Activated B cell treated with CpG ODN at 0.5 μM for 24 hours (primary cell): ENCODE measurements at regions of chr2 and their contacts with region 1.

Region 1: DNA sequence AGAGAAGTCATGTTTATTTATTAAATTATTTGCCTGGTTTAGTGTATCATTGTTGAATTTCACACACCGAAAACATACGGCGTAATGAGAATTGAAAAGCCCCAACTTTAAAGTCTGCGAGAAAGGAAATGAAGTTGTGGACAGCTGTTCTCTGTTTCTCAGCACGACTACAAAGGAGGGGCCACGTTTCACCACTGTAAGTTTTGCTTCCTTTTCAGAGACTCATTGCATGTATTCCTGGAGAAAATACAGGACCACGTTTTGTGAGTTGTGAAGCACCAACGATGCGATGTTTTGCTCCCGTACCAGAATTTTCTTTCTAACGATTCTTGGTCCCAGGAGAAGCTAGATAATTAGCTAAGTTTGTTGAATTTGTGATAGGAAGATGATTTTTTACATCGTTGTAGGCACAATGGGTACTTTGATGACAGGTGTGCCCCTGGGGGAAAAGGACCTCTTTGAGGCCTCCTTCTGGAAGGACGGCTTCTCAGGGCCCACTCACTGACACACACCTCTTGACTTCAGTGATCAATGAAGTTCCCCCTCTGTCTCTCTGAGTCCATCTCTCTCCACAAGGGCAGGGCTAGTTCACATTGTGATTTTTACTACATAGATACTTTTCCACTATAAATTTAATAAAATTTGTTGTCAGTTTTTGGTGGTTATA is 23.7 kb upstream of the ACKR3 start:
- DNase-seq: no peak
- ATAC-seq: peak; percentile 57
- H3K4me3 Mint-ChIP-seq: peak overlapping the region; percentile 78
- H3K27ac Mint-ChIP-seq: peak overlapping the region; percentile 98
- H3K4me1 Mint-ChIP-seq: peaks cover 78% of the 10 kb centered on the region
- H3K27me3 Mint-ChIP-seq: no peaks in the 10 kb centered on the region
- CTCF ChIP-seq: no peak

Region 2: DNA sequence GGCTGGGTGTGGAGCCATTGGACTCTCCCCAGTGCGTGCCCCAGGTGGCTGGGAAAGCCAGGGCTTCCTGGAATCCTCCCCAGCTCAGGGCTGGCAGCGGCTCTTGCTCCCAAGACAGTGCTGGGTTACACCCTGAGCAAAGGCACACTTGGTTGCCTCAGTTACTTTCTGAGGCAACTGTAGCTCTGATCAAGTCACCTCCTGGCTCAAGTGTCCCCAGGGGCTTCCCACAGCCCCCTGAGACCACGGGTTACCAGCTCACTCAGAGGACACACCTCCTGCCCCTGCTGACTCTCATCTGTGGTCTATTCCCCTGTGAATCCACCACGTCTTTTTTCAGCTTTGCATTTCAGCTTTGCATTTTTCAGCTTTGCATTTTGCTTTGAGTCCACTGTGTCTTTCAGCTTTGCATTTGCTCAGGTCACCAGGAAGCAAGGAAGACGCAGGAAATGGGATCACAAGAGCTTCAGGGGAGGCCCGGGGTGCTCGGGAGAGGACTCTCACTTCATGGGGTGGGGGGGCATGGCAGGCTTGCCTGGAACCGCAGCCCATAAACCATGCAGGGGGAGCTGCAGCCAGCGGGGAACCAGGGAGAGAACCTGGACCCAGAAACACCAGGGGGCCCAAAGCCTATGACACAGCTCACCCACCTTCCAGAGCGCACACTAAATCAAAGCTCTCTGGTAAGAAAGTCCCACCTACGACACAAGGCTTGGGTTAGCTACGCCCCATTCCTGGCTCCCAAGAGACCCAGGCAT is 143.7 kb before region 1 on chr2:
- CTCF ChIA-PET with region 1: no interaction called
- POLR2A ChIA-PET with region 1: interaction called, 4 read pairs
- intact Hi-C with region 1: loop called (anchors 5 kb)
- DNase-seq: peak; percentile 58
- ATAC-seq: peak; percentile 99
- H3K4me3 Mint-ChIP-seq: peak overlapping the region; percentile 66
- H3K27ac Mint-ChIP-seq: no peak overlapping the region
- H3K4me1 Mint-ChIP-seq: peaks cover 19% of the 10 kb centered on the region
- H3K27me3 Mint-ChIP-seq: peaks cover 5% of the 10 kb centered on the region
- CTCF ChIP-seq: no peak

Region 3: DNA sequence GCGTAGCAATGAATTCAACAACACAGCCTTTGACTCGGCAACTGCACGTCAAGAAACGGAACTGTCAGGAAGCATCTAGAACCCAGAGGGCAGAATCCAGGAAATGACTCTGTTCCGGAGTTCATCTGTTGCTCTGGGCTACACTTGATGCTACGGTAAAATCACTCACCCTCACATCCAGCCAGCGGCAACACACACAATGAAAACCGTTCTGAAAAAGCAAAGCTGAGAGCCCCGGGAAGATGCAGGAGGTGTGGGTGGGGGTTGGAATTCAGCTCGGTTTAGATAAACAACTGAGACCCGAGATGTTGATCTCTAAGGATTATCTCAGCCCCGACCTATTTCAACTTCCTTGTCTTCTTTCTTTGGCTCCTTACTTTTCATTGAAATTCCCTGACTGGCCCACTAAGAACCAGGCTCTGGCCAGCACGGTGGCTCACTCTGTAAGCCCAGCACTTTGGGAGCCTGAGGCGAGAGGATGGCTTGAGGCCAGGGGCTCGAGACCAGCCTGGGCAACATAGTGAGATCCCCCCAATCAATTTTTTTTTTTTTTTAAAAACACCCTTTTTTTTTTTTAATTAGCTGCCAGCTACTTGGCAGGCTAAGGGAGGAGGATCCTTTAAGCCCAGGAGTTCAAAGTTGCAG is 1057.9 kb after region 1 on chr2:
- CTCF ChIA-PET with region 1: no interaction called
- POLR2A ChIA-PET with region 1: no interaction called
- intact Hi-C with region 1: loop called (anchors 10 kb)
- DNase-seq: peak; percentile 33
- ATAC-seq: peak; percentile 97
- H3K4me3 Mint-ChIP-seq: peak overlapping the region; percentile 75
- H3K27ac Mint-ChIP-seq: peak overlapping the region; percentile 93
- H3K4me1 Mint-ChIP-seq: peaks cover 27% of the 10 kb centered on the region
- H3K27me3 Mint-ChIP-seq: peaks cover 2% of the 10 kb centered on the region
- CTCF ChIP-seq: no peak